ENCODE measurements at regions of chr1 and their contacts with region 1.

Region 1: DNA sequence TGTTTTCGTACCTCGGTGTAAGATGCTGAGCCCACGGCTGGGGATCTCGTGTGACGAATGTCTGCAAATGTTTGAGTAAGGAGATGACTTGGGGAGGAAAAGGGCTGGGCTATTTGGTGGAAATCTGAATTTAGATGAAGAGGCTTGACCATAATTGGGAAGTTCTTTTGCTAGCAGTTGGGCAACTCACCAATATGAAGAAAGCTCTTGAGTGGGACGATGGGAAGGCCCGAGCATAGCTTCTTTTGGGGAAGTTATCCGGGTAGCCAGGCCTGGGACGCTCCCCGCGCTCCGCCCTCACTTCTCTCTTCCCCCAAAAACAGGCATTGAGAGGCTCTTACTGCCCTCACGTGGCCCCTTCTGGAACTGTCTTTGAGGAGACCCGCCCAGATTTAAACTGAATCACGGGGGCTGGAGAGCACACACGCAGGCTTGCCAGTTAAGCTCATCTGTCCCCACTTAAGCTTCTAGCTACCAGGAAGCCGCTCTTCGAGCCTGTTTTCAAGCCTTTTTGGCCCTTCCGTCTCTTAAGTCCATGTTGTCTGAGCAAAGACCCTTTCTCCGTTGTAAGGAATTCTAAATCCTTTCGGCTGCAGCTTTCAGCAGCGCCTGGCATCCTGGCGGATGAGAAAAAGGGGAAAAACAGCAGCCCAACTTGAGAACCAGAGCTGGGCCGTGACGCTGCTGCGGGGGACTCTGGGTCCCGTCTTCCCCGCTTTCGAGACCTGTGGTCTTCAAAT is 93.1 kb downstream of the NID1 start:
- DNase-seq: peak; percentile 93
- ATAC-seq: peak; percentile 97
- H3K4me3 Mint-ChIP-seq: peak overlapping the region; percentile 81
- H3K27ac Mint-ChIP-seq: peak overlapping the region; percentile 72
- H3K4me1 Mint-ChIP-seq: peaks cover 8% of the 10 kb centered on the region
- H3K27me3 Mint-ChIP-seq: no peaks in the 10 kb centered on the region
- CTCF ChIP-seq: peak; percentile 63

Region 2: GRCh38 chr1:235504496-235505222 is 467.1 kb before region 1 on chr1:
- CTCF ChIA-PET with region 1: interaction called, 26 read pairs
- POLR2A ChIA-PET with region 1: interaction called, 4 read pairs
- DNase-seq: peak; percentile 100
- ATAC-seq: peak; percentile 86
- H3K4me3 Mint-ChIP-seq: peak overlapping the region; percentile 96
- H3K27ac Mint-ChIP-seq: peak overlapping the region; percentile 99
- H3K4me1 Mint-ChIP-seq: peaks cover 23% of the 10 kb centered on the region
- H3K27me3 Mint-ChIP-seq: no peaks in the 10 kb centered on the region
- CTCF ChIP-seq: no peak; the same call in 1 of the 2 replicates

Region 3: DNA sequence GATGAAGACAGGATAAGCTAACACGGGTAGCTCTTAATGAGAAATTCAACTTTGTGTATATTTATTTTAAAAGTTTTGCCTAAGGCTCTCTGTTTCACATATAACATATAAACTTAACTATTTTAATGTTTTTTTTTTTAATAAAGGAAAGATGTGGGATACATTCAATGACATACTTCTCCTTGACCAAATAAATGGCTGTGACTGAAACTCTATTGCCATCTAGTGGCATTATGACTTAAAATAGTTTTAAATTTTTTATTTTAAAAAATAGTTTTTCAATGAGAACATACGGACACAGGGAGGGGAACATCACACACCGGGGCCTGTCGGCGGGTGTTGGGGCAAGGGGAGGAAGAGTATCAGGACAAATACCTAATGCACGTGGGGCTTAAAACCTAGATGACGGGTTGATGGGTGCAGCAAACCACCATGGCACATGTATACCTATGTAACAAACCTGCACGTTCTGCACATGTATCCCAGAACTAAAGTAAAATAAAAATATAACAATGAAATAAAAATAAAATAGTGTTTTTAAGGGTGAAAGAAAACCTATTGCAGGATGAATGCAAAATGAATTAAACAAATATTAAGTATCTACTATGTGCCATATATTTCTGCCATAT is 188.5 kb before region 1 on chr1:
- CTCF ChIA-PET with region 1: interaction called, 16 read pairs
- POLR2A ChIA-PET with region 1: no interaction called
- DNase-seq: no peak
- ATAC-seq: 0 out of 2 replicates have a peak, but pooled peaks have one; percentile 18
- H3K4me3 Mint-ChIP-seq: no peak overlapping the region
- H3K27ac Mint-ChIP-seq: no peak overlapping the region
- H3K4me1 Mint-ChIP-seq: no peaks in the 10 kb centered on the region
- H3K27me3 Mint-ChIP-seq: no peaks in the 10 kb centered on the region
- CTCF ChIP-seq: no peak

Region 4: DNA sequence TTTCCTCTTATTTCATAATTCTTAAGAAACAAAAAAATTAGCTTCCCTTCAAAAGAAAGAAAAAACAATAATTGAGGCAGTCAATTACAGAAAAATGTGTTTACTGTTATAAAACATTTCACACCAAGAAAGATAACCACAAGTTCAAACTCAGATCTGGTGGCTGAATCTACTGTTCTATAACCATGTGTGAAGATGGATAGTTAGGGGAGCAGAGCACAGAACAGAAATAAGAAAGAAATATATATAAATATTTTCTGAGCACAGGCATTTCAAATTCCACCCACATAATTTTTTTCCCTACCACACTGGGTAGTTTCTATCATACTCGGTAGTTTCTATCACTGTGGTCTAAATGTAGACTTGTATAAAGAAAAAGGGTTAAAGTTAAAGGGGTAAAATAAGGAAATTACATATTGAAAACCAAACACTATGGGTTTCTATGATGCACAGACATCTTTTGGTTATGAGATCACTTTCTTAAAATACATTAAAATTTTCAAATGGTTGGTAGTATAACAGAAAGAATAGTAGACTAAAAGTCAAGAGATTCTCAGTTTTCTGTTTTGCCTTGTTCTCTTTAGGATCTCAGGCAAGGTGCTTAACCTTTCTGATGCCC is 115.8 kb before region 1 on chr1:
- CTCF ChIA-PET with region 1: interaction called, 15 read pairs
- POLR2A ChIA-PET with region 1: no interaction called
- DNase-seq: no peak
- ATAC-seq: no peak
- H3K4me3 Mint-ChIP-seq: no peak overlapping the region
- H3K27ac Mint-ChIP-seq: no peak overlapping the region
- H3K4me1 Mint-ChIP-seq: no peaks in the 10 kb centered on the region
- H3K27me3 Mint-ChIP-seq: no peaks in the 10 kb centered on the region; the same call in 1 of the 2 replicates
- CTCF ChIP-seq: no peak

Region 5: GRCh38 chr1:235898116-235898515 is 73.6 kb before region 1 on chr1:
- CTCF ChIA-PET with region 1: interaction called, 10 read pairs
- POLR2A ChIA-PET with region 1: no interaction called
- DNase-seq: no peak
- ATAC-seq: no peak
- H3K4me3 Mint-ChIP-seq: no peak overlapping the region
- H3K27ac Mint-ChIP-seq: 0 out of 2 replicates have a peak overlapping the region, but pooled peaks have one; percentile 52
- H3K4me1 Mint-ChIP-seq: peaks cover 5% of the 10 kb centered on the region; the same call in 1 of the 2 replicates
- H3K27me3 Mint-ChIP-seq: no peaks in the 10 kb centered on the region
- CTCF ChIP-seq: no peak

Region 6: DNA sequence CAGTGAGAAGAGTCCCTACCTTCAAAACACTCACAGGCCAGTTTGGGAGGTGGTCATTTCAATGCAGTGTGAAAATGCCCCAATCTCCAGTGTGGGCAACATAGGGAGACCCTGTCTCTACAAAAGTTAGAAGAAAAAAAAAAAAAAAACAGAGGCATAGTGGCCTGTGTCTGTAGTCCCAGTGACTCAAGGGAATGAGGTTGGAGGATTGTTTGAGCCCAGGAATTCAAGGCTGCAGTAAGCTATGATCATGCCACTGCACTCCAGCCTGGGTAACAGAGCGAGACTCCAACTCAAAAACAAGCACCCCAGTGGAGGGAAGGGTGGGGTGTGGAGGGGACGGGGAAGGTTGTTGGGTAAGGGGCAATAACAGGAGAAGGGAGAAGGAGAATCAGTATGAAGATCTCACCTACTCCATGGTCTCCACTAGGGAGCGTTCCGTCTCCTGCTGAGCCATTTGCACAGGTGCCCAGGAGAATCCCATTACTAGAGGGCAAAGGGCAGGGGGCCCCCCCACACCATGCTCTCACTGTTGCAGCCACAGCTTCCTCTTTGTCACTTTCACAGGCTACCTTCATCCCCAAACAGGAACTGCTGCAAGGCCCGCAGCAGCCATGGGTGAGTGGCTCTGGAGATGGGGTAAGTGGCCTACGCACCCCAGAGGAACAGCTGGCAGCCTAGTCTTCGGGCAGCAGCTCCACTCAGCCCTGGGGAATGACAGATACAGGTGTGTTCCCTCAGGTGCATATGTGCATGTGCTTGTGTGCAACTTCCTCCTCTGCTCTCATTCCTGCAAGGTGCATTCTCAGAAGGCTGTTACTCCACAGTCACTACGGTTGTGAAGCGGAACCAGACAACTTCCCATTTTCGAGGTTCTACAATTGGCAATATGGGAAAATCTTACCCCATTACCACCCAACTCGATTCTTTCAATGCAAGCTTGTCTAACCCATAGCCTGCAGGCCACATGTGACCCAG is 17.1 kb before region 1 on chr1:
- CTCF ChIA-PET with region 1: interaction called, 36 read pairs
- POLR2A ChIA-PET with region 1: no interaction called
- DNase-seq: no peak
- ATAC-seq: peak; percentile 53
- H3K4me3 Mint-ChIP-seq: no peak overlapping the region
- H3K27ac Mint-ChIP-seq: no peak overlapping the region
- H3K4me1 Mint-ChIP-seq: no peaks in the 10 kb centered on the region
- H3K27me3 Mint-ChIP-seq: no peaks in the 10 kb centered on the region
- CTCF ChIP-seq: no peak

Region 7: DNA sequence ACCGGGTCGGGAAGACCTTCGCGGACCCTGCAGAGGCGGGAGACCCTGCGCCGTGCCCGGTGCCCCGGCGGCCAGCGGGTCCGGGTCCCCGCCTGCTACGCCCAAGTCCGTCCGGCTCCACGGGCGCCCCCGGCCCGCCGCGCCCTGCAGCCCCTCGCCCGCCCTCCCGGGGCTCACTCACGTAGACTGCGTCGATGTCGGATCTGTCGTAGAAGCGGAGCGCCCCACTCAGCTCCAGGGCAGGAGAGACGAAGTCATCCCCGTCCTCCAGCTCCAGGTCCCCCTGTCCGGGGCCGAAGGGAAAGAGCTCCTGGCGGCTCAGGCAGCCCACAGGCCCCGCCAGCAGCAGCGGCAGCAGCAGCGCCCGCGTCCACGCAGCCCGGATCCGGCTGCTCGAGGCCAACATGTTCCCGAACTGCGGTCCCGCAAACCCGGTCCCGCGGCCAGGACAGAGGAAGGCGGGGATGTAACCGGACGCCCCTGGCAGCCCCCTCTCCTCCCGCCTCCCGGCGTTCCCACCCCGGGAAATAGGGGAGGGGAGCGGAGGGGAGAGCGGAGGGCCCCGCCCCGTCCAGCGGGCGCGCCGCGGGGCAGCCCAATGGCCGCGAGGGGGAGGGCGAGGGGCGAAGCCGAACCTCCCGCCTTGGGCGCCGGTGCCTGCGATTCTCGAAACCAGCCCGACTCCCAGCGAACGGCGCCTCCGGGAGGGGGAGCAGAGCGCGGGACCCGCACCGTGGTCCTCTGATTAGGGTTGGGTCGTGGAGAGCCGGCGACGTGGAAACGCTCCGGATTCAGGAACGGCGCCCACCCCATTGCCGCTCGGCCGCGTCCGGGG is 93.2 kb after region 1 on chr1 and contains the start of gene NID1:
- CTCF ChIA-PET with region 1: interaction called, 25 read pairs
- POLR2A ChIA-PET with region 1: interaction called, 6 read pairs
- DNase-seq: peak; percentile 87
- ATAC-seq: peak; percentile 84
- H3K4me3 Mint-ChIP-seq: peak within 1 kb of the TSS; percentile 76
- H3K27ac Mint-ChIP-seq: no peak within 1 kb of the TSS
- H3K4me1 Mint-ChIP-seq: peaks cover 18% of the 10 kb centered on the region
- H3K27me3 Mint-ChIP-seq: peaks cover 60% of the 10 kb centered on the region
- CTCF ChIP-seq: no peak
- total RNA-seq, gene NID1: 19.2 to 29.8 TPM (median 28.6 TPM) in 3 replicates

Region 8: GRCh38 chr1:236075848-236076247 is 104.1 kb after region 1 on chr1:
- CTCF ChIA-PET with region 1: no interaction called
- POLR2A ChIA-PET with region 1: no interaction called
- DNase-seq: no peak
- ATAC-seq: no peak
- H3K4me3 Mint-ChIP-seq: no peak overlapping the region
- H3K27ac Mint-ChIP-seq: no peak overlapping the region
- H3K4me1 Mint-ChIP-seq: no peaks in the 10 kb centered on the region
- H3K27me3 Mint-ChIP-seq: no peaks in the 10 kb centered on the region
- CTCF ChIP-seq: no peak

Region 9: DNA sequence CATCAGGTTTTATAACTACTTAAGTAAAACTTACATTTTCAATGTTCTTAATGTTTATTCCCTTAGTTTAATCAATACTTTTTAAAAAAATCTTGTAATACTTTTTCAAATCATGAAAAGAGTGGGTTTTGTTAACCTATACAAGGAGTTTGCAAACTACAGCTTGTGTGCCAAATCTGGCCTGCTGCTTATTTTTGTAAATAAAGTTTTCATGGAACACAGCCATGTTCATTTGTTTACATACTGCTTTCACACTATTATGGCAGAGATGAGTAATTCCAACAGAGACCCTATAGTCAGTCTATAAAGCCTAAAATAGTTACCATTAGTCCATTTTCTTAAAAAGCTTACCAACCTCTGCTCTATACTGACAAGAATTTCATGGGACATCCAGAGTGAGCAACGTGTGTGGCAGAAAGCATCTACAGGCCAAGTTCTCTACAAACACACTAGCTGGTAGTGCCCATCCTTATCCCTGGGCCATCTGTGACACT is 267.4 kb after region 1 on chr1:
- CTCF ChIA-PET with region 1: no interaction called
- POLR2A ChIA-PET with region 1: no interaction called
- DNase-seq: no peak
- ATAC-seq: no peak
- H3K4me3 Mint-ChIP-seq: no peak overlapping the region
- H3K27ac Mint-ChIP-seq: no peak overlapping the region
- H3K4me1 Mint-ChIP-seq: no peaks in the 10 kb centered on the region
- H3K27me3 Mint-ChIP-seq: no peaks in the 10 kb centered on the region
- CTCF ChIP-seq: no peak

Measured in WTC11 (cell line).